Activated naive CD4-positive, alpha-beta T cell treated with anti-CD3 and anti-CD28 coated beads for 36 hours (primary cell): ENCODE measurements at regions of chr3 and their contacts with region 1.

Region 1: GRCh38 chr3:48739955-48740823 is 23.2 kb upstream of the IP6K2 start:
- DNase-seq: peak; percentile 71
- H3K4me3 Mint-ChIP-seq: no peak overlapping the region
- H3K27ac Mint-ChIP-seq: no peak overlapping the region
- H3K4me1 Mint-ChIP-seq: no peaks in the 10 kb centered on the region
- H3K27me3 Mint-ChIP-seq: no peaks in the 10 kb centered on the region

Region 2: DNA sequence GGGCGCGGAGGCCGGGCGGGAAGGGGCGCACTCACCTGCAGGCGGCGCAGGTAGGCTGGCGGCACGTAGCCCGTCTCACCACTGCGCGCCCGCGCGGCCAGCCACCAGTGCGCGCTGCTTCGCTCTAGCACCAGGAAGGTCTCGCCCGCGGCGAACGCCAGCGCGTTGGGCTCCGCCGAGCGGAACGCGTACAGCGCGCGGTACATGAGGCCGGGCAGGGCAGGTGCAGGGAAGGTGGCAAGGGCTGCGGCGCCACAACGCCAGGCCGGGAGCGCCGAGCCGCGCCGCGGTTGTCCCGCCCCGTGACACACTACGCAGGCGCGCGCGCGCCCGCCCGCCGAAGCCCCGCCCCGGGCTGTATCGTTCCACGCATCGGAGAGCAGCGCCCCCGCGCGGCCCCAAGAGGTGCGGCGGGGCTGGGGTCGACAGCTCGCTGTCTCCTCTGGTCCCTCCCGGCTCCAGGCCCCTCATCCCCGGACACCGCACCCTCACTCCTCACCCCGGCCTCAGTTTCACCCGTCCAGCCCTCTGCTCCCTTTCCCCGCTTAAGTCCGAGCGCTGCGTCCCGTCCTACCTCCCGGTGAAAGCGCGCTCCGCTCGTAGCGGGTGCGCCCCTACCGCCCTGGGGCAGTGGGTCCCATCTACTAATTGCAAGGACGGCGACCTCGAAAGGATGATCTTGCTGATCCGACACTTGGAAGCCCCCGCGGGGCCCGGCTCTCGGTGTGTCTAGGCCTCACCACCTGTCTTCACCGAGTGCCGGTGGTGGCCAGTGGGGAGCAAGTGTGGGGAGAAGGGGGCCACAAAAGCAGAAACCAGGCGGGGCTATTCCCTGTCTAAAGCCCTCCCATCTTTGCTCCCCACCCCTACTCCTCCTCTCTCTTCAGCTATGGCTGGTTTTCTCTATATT is 54.3 kb before region 1 on chr3 and contains the start of gene NCKIPSD:
- CTCF ChIA-PET with region 1: interaction called, 4 read pairs
- intact Hi-C with region 1: loop called (anchors 1 kb)
- DNase-seq: peak; percentile 91
- H3K4me3 Mint-ChIP-seq: peak within 1 kb of the TSS; percentile 83
- H3K27ac Mint-ChIP-seq: peak within 1 kb of the TSS; percentile 73
- H3K4me1 Mint-ChIP-seq: peaks cover 25% of the 10 kb centered on the region
- H3K27me3 Mint-ChIP-seq: no peaks in the 10 kb centered on the region
- total RNA-seq, gene NCKIPSD: 27.3 to 28.7 TPM

Region 3: DNA sequence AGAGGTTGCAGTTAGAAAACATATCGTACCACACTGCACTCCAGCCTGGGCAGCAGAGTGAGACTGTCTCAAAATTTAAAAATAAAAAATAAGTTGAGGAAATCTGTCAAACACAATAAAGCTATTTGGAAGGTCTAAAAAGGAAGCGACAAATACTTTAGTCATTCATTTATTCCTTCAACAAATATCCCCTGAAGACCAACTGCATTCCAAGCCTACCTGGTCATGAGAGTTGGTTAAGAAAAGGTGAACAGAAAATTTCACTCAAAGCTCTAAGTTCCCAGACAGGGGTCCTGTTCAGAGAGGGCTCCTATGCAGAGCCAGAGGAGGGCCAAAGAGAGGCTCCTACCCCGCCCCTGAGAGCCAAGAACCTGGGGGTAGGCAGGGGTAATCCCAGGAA is 122.9 kb after region 1 on chr3:
- CTCF ChIA-PET with region 1: interaction called, 3 read pairs
- intact Hi-C with region 1: loop called (anchors 2 kb)
- DNase-seq: no peak
- H3K4me3 Mint-ChIP-seq: no peak overlapping the region
- H3K27ac Mint-ChIP-seq: no peak overlapping the region
- H3K4me1 Mint-ChIP-seq: no peaks in the 10 kb centered on the region
- H3K27me3 Mint-ChIP-seq: no peaks in the 10 kb centered on the region

Region 4: DNA sequence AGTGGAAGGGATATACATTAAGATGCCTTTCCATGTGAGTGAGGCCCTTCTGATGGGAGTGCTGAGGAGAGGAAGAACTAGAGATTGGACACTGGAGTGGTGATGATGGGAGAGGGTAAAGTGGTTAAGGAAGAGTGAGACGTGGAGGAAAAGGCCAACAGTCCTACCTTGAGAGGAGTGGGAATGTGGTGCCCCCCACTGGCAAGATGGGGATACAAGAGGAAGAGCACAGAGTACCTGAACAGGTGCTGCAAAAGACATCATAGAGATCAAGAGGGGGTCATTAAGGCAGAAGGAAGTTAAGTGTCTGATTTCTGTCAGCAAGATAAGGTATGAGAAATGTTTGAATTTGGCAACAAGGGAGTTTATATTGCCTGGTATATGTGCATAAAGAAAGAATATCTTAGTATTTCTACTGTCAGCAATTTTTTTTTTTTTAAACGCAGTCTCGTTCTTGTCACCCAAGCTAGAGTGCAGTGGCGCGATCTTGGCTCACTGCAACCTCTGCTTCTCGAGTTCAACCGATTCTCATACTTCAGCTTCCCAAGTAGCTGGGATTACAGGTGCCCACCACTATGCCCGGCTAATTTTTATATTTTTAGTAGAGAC is 212.4 kb after region 1 on chr3:
- CTCF ChIA-PET with region 1: interaction called, 5 read pairs
- intact Hi-C with region 1: loop called (anchors 5 kb)
- DNase-seq: peak; percentile 75
- H3K4me3 Mint-ChIP-seq: no peak overlapping the region
- H3K27ac Mint-ChIP-seq: no peak overlapping the region
- H3K4me1 Mint-ChIP-seq: peaks cover 16% of the 10 kb centered on the region
- H3K27me3 Mint-ChIP-seq: no peaks in the 10 kb centered on the region

Region 5: DNA sequence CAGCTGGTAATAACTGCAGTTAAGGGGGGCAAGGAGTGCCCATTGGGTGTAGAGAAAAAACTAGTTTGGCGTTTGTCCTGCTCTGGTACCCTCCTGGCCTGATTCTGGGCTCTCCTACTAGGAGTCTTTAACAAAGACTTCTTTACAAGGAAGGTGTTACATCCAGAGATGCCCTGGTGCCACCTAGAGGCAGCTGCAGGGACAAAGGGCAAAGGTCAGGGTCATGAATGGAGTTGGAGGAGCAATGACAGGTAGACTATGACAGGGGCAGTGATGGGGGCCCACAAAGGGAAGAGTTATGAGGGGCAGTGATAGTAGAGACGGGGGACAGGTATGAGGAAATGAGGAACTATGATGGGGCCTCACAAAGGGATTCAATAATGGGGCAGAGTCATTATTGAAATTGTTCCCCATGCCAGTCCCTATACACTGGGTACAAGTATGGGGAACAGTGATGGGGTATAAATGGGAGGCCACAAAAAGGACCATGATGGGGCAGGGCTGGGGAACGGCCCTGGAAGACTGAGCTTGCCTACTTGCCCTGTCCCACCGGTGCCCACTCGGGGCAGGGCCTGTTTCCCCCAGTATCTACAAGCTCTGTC is 418.0 kb after region 1 on chr3:
- CTCF ChIA-PET with region 1: no interaction called
- intact Hi-C with region 1: loop called (anchors 2 kb)
- DNase-seq: peak; percentile 85
- H3K4me3 Mint-ChIP-seq: no peak overlapping the region
- H3K27ac Mint-ChIP-seq: no peak overlapping the region
- H3K4me1 Mint-ChIP-seq: peaks cover 10% of the 10 kb centered on the region
- H3K27me3 Mint-ChIP-seq: no peaks in the 10 kb centered on the region